GM12878 (cell line): ENCODE measurements at regions of chr2 and their contacts with region 1.

Region 1: GRCh38 chr2:38720613-38721241 is 30.4 kb downstream of the SRSF7 start:
- DNase-seq: peak; percentile 40
- ATAC-seq: peak; percentile 56
- H3K4me3 ChIP-seq: no peak overlapping the region
- H3K27ac ChIP-seq: no peak overlapping the region
- H3K4me1 ChIP-seq: peaks cover 33% of the 10 kb centered on the region
- H3K27me3 ChIP-seq: no peaks in the 10 kb centered on the region
- CTCF ChIP-seq: no peak
- EP300 ChIP-seq: no peak; a peak in 1 of 4 replicates
- POLR2A ChIP-seq: no peak
- RAD21 ChIP-seq: no peak

Region 2: GRCh38 chr2:37925063-37925897 is 795.4 kb before region 1 on chr2 and contains the start of gene RMDN2:
- CTCF ChIA-PET with region 1: no interaction called
- POLR2A ChIA-PET with region 1: no interaction called
- RAD21 ChIA-PET with region 1: no interaction called
- SMC1A ChIA-PET with region 1: no interaction called
- in situ Hi-C with region 1: no loop called
- intact Hi-C with region 1: no loop called
- DNase-seq: peak; percentile 42
- ATAC-seq: peak; percentile 96
- H3K4me3 ChIP-seq: peak within 1 kb of the TSS; percentile 73
- H3K27ac ChIP-seq: peak within 1 kb of the TSS; percentile 88
- H3K4me1 ChIP-seq: peaks cover 7% of the 10 kb centered on the region
- H3K27me3 ChIP-seq: no peaks in the 10 kb centered on the region
- CTCF ChIP-seq: no peak
- EP300 ChIP-seq: no peak
- POLR2A ChIP-seq: peak; percentile 87
- RAD21 ChIP-seq: 0 out of 2 replicates have a peak, but pooled peaks have one; percentile 10
- polyA plus RNA-seq, gene RMDN2: 6.6 to 9.1 TPM

Region 3: GRCh38 chr2:38515160-38516074 is 205.3 kb before region 1 on chr2:
- CTCF ChIA-PET with region 1: no interaction called
- POLR2A ChIA-PET with region 1: no interaction called
- RAD21 ChIA-PET with region 1: no interaction called
- SMC1A ChIA-PET with region 1: no interaction called
- in situ Hi-C with region 1: no loop called
- intact Hi-C with region 1: no loop called
- DNase-seq: no peak
- ATAC-seq: no peak
- H3K4me3 ChIP-seq: no peak overlapping the region
- H3K27ac ChIP-seq: no peak overlapping the region
- H3K4me1 ChIP-seq: no peaks in the 10 kb centered on the region
- H3K27me3 ChIP-seq: no peaks in the 10 kb centered on the region
- CTCF ChIP-seq: no peak
- EP300 ChIP-seq: no peak
- POLR2A ChIP-seq: no peak
- RAD21 ChIP-seq: no peak

Region 4: DNA sequence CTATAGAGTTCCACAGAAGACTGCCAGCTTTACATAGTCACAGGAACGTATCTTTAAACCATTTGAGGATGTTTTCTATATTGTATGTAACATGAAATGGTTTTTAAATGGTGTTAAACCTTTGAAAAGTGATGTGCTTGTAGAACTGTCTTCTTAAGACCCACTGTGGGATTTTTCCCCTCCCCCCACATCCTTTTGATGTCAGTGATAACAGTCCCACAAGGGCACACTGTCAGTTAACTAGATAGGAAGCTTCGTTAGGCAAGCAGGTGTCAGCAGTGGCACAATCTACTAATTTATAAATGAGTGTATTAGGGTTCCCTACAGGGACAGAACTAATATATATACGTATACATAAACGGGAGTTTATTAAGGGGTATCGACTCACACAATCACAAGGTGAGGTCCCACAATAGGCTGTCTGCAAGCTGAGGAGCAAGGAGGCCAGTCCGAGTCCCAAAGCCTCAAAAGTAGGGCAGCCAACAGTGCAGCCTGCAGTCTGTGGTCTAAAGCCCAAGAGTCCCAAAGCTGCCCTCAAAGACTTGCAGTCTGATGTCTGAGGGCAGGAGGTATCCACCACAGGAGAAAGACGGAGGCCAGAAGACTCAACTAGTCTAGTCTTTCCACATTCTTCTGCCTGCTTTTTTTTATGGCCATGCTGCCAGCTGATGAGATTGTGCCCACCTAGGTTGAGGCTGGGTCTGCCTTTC is 94.2 kb before region 1 on chr2:
- CTCF ChIA-PET with region 1: interaction called, 14 read pairs
- POLR2A ChIA-PET with region 1: interaction called, 3 read pairs
- RAD21 ChIA-PET with region 1: interaction called, 3 read pairs
- SMC1A ChIA-PET with region 1: no interaction called
- in situ Hi-C with region 1: no loop called
- intact Hi-C with region 1: no loop called
- DNase-seq: no peak
- ATAC-seq: no peak
- H3K4me3 ChIP-seq: no peak overlapping the region
- H3K27ac ChIP-seq: no peak overlapping the region
- H3K4me1 ChIP-seq: no peaks in the 10 kb centered on the region
- H3K27me3 ChIP-seq: peaks cover 0 to 2% of the 10 kb centered on the region in 2 experiments; a peak in 1 of 4 replicates
- CTCF ChIP-seq: no peak
- EP300 ChIP-seq: no peak
- POLR2A ChIP-seq: no peak
- RAD21 ChIP-seq: no peak

Region 5: GRCh38 chr2:38665854-38666555 is 54.7 kb before region 1 on chr2 and contains the start of gene GALM:
- CTCF ChIA-PET with region 1: interaction called, 4 read pairs
- POLR2A ChIA-PET with region 1: interaction called, 8 read pairs
- RAD21 ChIA-PET with region 1: interaction called, 4 read pairs
- SMC1A ChIA-PET with region 1: interaction called, 24 read pairs
- in situ Hi-C with region 1: no loop called
- intact Hi-C with region 1: no loop called
- DNase-seq: no peak
- ATAC-seq: peak; percentile 55
- H3K4me3 ChIP-seq: peak within 1 kb of the TSS; percentile 56; the same call in 1 of the 2 replicates
- H3K27ac ChIP-seq: peak within 1 kb of the TSS; percentile 33; the same call in 1 of the 2 replicates
- H3K4me1 ChIP-seq: peaks cover 28% of the 10 kb centered on the region
- H3K27me3 ChIP-seq: no peaks in the 10 kb centered on the region
- CTCF ChIP-seq: no peak
- EP300 ChIP-seq: no peak
- POLR2A ChIP-seq: no peak
- RAD21 ChIP-seq: no peak
- polyA plus RNA-seq, gene GALM: 1.5 to 1.7 TPM

Region 6: GRCh38 chr2:38709567-38710194 is 11.0 kb before region 1 on chr2:
- CTCF ChIA-PET with region 1: interaction called, 8 read pairs
- POLR2A ChIA-PET with region 1: interaction called, 4 read pairs
- RAD21 ChIA-PET with region 1: interaction called, 8 read pairs
- SMC1A ChIA-PET with region 1: interaction called, 11 read pairs
- in situ Hi-C with region 1: no loop called
- intact Hi-C with region 1: no loop called
- DNase-seq: peak; percentile 35
- ATAC-seq: peak; percentile 87
- H3K4me3 ChIP-seq: no peak overlapping the region
- H3K27ac ChIP-seq: no peak overlapping the region
- H3K4me1 ChIP-seq: peaks cover 16% of the 10 kb centered on the region
- H3K27me3 ChIP-seq: no peaks in the 10 kb centered on the region
- CTCF ChIP-seq: no peak
- EP300 ChIP-seq: peak in 1 of 2 experiments; percentile 47; a peak in 2 of 4 replicates
- POLR2A ChIP-seq: no peak
- RAD21 ChIP-seq: no peak

Region 7: DNA sequence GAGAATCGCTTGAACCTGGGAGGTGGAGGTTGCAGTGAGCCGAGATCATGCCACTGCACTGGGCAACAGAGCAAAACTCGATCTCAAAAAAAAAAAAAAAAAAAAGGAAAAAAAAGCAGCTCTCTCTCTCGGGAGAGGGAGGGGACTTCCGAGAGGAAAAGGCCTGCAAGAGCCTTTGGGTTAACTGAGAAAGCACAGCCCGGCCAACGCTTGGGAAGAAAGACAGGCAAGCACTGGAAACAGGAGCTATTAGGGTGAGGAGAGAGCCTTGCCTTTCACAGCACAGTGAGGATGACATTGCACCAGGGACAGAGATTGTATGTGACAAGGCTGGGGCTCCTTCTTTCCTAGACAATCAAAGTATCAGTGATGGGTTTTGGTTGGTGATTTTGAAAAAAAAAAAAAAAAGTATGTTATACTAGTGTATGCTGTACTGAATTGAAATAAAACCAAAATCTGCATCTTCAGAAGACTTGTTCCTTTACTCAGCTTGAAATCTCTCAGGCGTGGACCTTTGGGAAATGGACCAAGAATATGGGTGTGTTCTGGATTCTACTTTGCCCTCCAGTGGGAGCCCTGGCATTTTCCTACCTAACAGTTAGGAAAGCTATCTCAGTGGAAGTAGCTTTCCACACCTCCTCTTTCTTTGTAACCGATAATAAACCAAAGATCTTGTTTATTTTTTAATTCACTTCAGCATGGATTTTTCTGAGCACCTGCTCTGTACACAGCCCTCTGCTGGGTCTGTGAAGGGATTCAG is 13.8 kb after region 1 on chr2:
- CTCF ChIA-PET with region 1: interaction called, 9 read pairs
- POLR2A ChIA-PET with region 1: no interaction called
- RAD21 ChIA-PET with region 1: no interaction called
- SMC1A ChIA-PET with region 1: interaction called, 11 read pairs
- in situ Hi-C with region 1: no loop called
- intact Hi-C with region 1: no loop called
- DNase-seq: no peak
- ATAC-seq: no peak
- H3K4me3 ChIP-seq: no peak overlapping the region
- H3K27ac ChIP-seq: no peak overlapping the region
- H3K4me1 ChIP-seq: no peaks in the 10 kb centered on the region
- H3K27me3 ChIP-seq: no peaks in the 10 kb centered on the region
- CTCF ChIP-seq: no peak
- EP300 ChIP-seq: no peak
- POLR2A ChIP-seq: no peak
- RAD21 ChIP-seq: no peak

Region 8: GRCh38 chr2:38740851-38741731 is 20.4 kb after region 1 on chr2:
- CTCF ChIA-PET with region 1: interaction called, 13 read pairs
- POLR2A ChIA-PET with region 1: interaction called, 7 read pairs
- RAD21 ChIA-PET with region 1: interaction called, 4 read pairs
- SMC1A ChIA-PET with region 1: interaction called, 10 read pairs
- in situ Hi-C with region 1: no loop called
- intact Hi-C with region 1: no loop called
- DNase-seq: no peak
- ATAC-seq: peak; percentile 10
- H3K4me3 ChIP-seq: no peak overlapping the region
- H3K27ac ChIP-seq: no peak overlapping the region
- H3K4me1 ChIP-seq: no peaks in the 10 kb centered on the region
- H3K27me3 ChIP-seq: no peaks in the 10 kb centered on the region
- CTCF ChIP-seq: peak in 2 of 3 experiments; percentile 40 to 41; a peak in 4 of 6 replicates
- EP300 ChIP-seq: no peak
- POLR2A ChIP-seq: no peak; the same call in 1 of the 2 replicates
- RAD21 ChIP-seq: peak; percentile 41